ENCODE measurements at regions of chr1 and their contacts with region 1.

Region 1: DNA sequence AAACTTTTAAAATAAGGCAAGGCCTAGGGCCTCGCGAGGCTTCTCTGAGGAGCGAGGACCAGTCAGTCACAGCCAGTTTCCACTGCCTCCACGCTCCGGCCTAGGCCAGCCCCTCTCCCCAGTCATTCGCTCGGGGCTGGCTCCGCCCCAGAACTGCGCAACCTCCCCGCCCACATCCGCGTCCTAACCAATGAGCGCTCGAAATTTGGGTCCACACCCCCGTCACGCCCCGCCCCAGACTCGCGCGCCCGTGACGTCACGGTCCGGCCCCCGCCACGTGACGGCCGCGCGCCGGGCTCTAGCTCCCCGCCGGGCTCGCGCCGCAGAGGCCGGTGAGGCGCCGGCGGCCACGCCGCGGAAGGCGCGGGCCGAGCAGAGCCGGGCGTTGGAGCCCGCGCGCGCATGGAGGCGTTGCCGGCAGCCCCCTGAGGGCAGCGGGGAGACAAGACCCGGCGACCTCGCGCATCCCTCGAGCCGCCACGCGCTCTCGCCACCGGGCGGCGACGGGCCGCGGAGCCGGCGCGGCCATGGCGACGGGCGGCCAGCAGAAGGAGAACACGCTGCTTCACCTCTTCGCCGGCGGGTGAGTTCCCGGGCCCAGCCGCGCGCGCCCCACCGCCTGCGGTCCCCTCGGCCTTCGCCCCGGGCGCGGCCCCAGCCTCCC is at the start of gene SLC25A33:
- DNase-seq: peak; percentile 75 to 99 (median 98)
- H3K4me3 ChIP-seq: peak within 1 kb of the TSS; percentile 62 to 96 (median 86)
- H3K27ac ChIP-seq: peak within 1 kb of the TSS; percentile 59 to 99 (median 93)
- H3K27me3 ChIP-seq: no peaks in the 10 kb centered on the region
- CTCF ChIP-seq: peak in 5 of 56 donors; percentile 2 to 15 (median 12)
- total RNA-seq, gene SLC25A33: 5.8 to 21.0 (median 10.0) TPM

Region 2: DNA sequence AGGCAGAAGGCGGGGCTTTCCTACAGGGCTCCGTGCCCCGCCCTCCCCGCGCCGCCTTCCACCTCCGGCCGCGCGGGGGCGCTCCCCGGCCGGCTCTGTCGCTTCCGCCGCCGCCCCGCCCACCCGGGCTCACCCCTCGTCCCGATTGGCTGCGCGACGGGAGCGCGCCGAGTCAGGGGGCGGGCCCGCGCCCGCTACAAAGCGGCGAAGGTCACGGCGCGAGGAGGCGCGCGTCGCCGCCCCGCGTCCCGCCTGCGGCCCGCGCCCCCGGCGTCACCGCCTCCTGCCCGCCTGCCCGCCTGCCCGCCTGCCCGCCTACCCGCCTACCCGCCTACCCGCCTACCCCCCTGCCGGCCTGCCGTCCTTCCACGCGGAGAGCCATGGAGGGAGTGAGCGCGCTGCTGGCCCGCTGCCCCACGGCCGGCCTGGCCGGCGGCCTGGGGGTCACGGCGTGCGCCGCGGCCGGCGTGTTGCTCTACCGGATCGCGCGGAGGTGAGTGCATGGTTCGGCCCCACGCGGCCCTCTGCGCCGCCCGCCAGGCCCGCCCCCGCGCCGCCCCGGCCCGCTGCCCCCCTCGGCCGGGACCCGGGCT is 49.4 kb after region 1 on chr1 and contains the start of gene TMEM201:
- intact Hi-C with region 1: loop called (anchors 2 kb)
- DNase-seq: peak; percentile 84 to 95 (median 92)
- H3K4me3 ChIP-seq: peak within 1 kb of the TSS; percentile 32 to 89 (median 75)
- H3K27ac ChIP-seq: peak within 1 kb of the TSS in 55 of 59 donors; percentile 33 to 92 (median 80)
- H3K27me3 ChIP-seq: no peaks in the 10 kb centered on the region
- CTCF ChIP-seq: peak; percentile 50 to 98 (median 88)
- total RNA-seq, gene TMEM201: 15.4 to 35.6 (median 20.9) TPM

Measured in dorsolateral prefrontal cortex (tissue), 120 donors.